Astrocyte of the cerebellum (primary cell): ENCODE measurements at regions of chr4 and their contacts with region 1.

Region 1: GRCh38 chr4:102620697-102621497 is 119.7 kb downstream of the NFKB1 start:
- DNase-seq: peak; percentile 99
- H3K4me3 ChIP-seq: no peak overlapping the region
- CTCF ChIP-seq: peak; percentile 79

Region 2: GRCh38 chr4:102687373-102687981 is 66.6 kb after region 1 on chr4:
- in situ Hi-C with region 1: loop called (anchors 5 kb)
- DNase-seq: peak; percentile 16
- H3K4me3 ChIP-seq: no peak overlapping the region
- CTCF ChIP-seq: no peak

Region 3: DNA sequence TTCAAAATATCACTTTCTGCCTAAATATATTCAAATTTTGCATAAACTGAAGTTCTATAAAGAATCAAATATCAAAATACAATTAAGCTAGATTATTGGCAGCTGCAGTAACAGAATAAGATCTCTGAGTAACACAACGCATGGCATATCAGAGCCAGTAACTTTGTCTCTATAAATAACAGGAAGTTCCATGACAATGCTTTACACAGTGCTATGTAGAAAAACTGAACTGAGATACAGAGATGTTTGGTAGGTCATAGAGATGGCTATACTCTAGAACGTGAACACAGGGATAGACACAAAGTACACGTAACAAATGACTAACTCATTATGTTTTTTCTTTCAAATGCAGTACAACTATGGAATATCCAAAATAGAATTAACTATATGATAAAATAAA is 188.3 kb after region 1 on chr4:
- in situ Hi-C with region 1: loop called (anchors 5 kb)
- DNase-seq: no peak
- H3K4me3 ChIP-seq: no peak overlapping the region
- CTCF ChIP-seq: no peak

Region 4: GRCh38 chr4:103002551-103002950 is 381.7 kb after region 1 on chr4:
- in situ Hi-C with region 1: loop called (anchors 5 kb)
- DNase-seq: peak; percentile 41
- H3K4me3 ChIP-seq: no peak overlapping the region
- CTCF ChIP-seq: no peak

Region 5: DNA sequence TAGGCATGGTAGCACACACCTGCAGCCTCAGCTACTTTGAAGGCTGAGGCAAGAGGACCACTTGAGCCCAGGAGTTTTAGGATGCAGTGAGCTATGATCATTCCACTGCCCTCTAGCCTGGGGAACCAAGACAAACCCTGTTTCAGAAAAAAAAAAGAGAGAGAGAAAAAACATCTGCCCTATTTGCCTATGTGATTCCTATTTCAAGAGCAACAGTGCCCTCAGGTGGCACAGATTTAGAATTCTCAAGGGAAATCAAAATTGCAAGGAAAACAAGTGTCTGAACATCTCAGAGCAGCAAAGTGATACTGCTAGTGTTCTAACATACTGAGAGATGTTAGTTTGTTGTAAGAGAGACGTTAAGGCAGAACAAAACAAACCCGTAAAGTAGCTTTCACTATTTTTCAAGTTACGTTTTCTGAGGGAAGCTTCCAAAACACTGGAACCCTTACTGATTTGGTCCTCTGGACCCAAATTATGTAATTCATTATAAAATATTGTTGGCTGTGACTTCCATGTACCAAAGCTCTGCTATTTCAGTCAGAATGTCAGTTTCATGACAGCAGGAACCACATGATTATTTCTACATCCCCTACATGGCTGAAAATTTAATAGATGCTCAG is 470.8 kb after region 1 on chr4:
- in situ Hi-C with region 1: loop called (anchors 5 kb)
- DNase-seq: peak; percentile 67
- H3K4me3 ChIP-seq: no peak overlapping the region
- CTCF ChIP-seq: peak; percentile 62